HepG2 (cell line): ENCODE measurements at regions of chr3 and their contacts with region 1.

Region 1: DNA sequence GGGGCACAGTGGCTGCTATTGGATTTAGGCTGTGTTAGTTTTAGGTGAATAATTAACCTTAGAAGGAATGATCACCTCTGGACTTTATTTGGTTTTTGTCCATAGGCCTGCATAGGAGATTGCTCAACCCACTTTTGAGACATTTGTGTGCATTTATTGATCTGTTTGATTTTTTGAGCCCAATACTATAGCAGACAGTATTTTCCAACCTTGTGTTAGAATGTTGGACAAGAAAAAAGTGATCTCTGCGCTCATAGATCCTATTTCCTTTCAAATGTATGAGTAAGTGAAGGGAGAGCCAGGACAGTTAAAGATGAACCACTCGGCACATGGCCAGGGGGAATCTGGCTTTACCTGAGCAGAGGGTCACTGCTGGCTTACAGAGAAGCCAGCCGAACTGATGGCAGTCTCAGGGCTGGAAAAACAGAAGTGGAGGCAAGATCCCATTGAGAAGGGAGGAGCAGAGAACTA is 8.8 kb upstream of the TOPBP1 start:
- DNase-seq: peak; percentile 98
- ATAC-seq: peak; percentile 91
- H3K4me3 ChIP-seq: peak overlapping the region in 2 of 3 experiments; percentile 5 to 47; a peak in 2 of 6 replicates
- H3K27ac ChIP-seq: peak overlapping the region; percentile 89
- H3K4me1 ChIP-seq: peaks cover 90% of the 10 kb centered on the region
- H3K27me3 ChIP-seq: no peaks in the 10 kb centered on the region
- CTCF ChIP-seq: 0 out of 2 replicates have a peak, but pooled peaks have one; percentile 15
- EP300 ChIP-seq: peak; percentile 78 to 98
- POLR2A ChIP-seq: no peak
- RAD21 ChIP-seq: no peak

Region 2: GRCh38 chr3:133691410-133692107 is 21.0 kb after region 1 on chr3:
- CTCF ChIA-PET with region 1: no interaction called
- POLR2A ChIA-PET with region 1: no interaction called
- in situ Hi-C with region 1: no loop called
- intact Hi-C with region 1: no loop called
- DNase-seq: no peak
- ATAC-seq: no peak
- H3K4me3 ChIP-seq: no peak overlapping the region
- H3K27ac ChIP-seq: no peak overlapping the region
- H3K4me1 ChIP-seq: peaks cover 50% of the 10 kb centered on the region
- H3K27me3 ChIP-seq: no peaks in the 10 kb centered on the region
- CTCF ChIP-seq: no peak
- EP300 ChIP-seq: no peak
- POLR2A ChIP-seq: no peak
- RAD21 ChIP-seq: no peak

Region 3: DNA sequence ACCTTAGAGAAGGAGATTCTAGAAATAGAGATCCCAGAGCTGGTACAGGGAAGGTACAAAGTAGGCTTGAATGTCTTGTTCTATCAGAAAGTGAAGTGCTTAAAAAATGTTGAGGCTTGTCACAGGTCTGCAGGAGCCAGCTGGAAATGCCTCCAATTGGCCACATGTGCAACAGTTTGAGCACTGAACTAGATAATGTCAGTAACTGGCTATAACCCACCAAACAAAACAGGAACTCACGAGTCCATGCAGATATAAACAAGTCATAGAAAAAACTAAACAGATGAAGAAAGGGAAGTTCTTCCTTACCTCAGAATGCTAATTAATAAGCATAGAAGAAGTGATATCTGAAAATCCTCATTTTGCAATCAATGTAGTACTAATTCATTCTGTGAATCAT is 63.7 kb after region 1 on chr3:
- CTCF ChIA-PET with region 1: no interaction called
- POLR2A ChIA-PET with region 1: interaction called, 14 read pairs
- in situ Hi-C with region 1: no loop called
- intact Hi-C with region 1: no loop called
- DNase-seq: no peak
- ATAC-seq: no peak
- H3K4me3 ChIP-seq: no peak overlapping the region
- H3K27ac ChIP-seq: peak overlapping the region; percentile 63
- H3K4me1 ChIP-seq: peaks cover 68% of the 10 kb centered on the region
- H3K27me3 ChIP-seq: no peaks in the 10 kb centered on the region
- CTCF ChIP-seq: no peak
- EP300 ChIP-seq: no peak
- POLR2A ChIP-seq: no peak
- RAD21 ChIP-seq: no peak

Region 4: GRCh38 chr3:133750259-133750656 is 79.7 kb after region 1 on chr3:
- CTCF ChIA-PET with region 1: no interaction called
- POLR2A ChIA-PET with region 1: interaction called, 91 read pairs
- in situ Hi-C with region 1: no loop called
- intact Hi-C with region 1: loop called (anchors 1 kb)
- DNase-seq: no peak
- ATAC-seq: no peak
- H3K4me3 ChIP-seq: peak overlapping the region; percentile 63 to 85 (median 63)
- H3K27ac ChIP-seq: peak overlapping the region; percentile 15
- H3K4me1 ChIP-seq: peaks cover 64% of the 10 kb centered on the region
- H3K27me3 ChIP-seq: peaks cover 0 to 3% of the 10 kb centered on the region in 2 experiments; a peak in 1 of 5 replicates
- CTCF ChIP-seq: no peak
- EP300 ChIP-seq: no peak
- POLR2A ChIP-seq: no peak
- RAD21 ChIP-seq: no peak